Activated B cell treated with CpG ODN at 0.5 μM for 24 hours (primary cell): ENCODE measurements at regions of chr12 and their contacts with region 1.

Region 1: GRCh38 chr12:93677195-93678064 is at the start of gene CRADD:
- DNase-seq: peak; percentile 72
- ATAC-seq: peak; percentile 94
- H3K4me3 Mint-ChIP-seq: peak within 1 kb of the TSS; percentile 99
- H3K27ac Mint-ChIP-seq: peak within 1 kb of the TSS; percentile 100
- H3K4me1 Mint-ChIP-seq: peaks cover 23% of the 10 kb centered on the region
- H3K27me3 Mint-ChIP-seq: peaks cover 12% of the 10 kb centered on the region
- CTCF ChIP-seq: no peak
- total RNA-seq, gene CRADD: 10.3 and 15.3 TPM in 2 replicates

Region 2: GRCh38 chr12:93441617-93442410 is 235.6 kb before region 1 on chr12 and contains the start of gene UBE2N:
- CTCF ChIA-PET with region 1: no interaction called
- POLR2A ChIA-PET with region 1: interaction called, 9 read pairs
- intact Hi-C with region 1: loop called (anchors 1 kb)
- DNase-seq: peak; percentile 99
- ATAC-seq: peak; percentile 84
- H3K4me3 Mint-ChIP-seq: peak within 1 kb of the TSS; percentile 96
- H3K27ac Mint-ChIP-seq: peak within 1 kb of the TSS; percentile 96
- H3K4me1 Mint-ChIP-seq: peaks cover 56% of the 10 kb centered on the region
- H3K27me3 Mint-ChIP-seq: no peaks in the 10 kb centered on the region
- CTCF ChIP-seq: no peak
- total RNA-seq, gene UBE2N: 152 and 163 TPM in 2 replicates

Region 3: GRCh38 chr12:93624595-93625294 is 52.7 kb before region 1 on chr12:
- CTCF ChIA-PET with region 1: no interaction called
- POLR2A ChIA-PET with region 1: no interaction called
- intact Hi-C with region 1: loop called (anchors 2 kb)
- DNase-seq: no peak
- ATAC-seq: peak; percentile 83
- H3K4me3 Mint-ChIP-seq: no peak overlapping the region
- H3K27ac Mint-ChIP-seq: no peak overlapping the region
- H3K4me1 Mint-ChIP-seq: peaks cover 5% of the 10 kb centered on the region
- H3K27me3 Mint-ChIP-seq: no peaks in the 10 kb centered on the region
- CTCF ChIP-seq: no peak

Region 4: GRCh38 chr12:93742110-93742934 is 64.9 kb after region 1 on chr12:
- CTCF ChIA-PET with region 1: no interaction called
- POLR2A ChIA-PET with region 1: interaction called, 5 read pairs
- intact Hi-C with region 1: loop called (anchors 1 kb)
- DNase-seq: peak; percentile 56
- ATAC-seq: peak; percentile 93
- H3K4me3 Mint-ChIP-seq: peak overlapping the region; percentile 87
- H3K27ac Mint-ChIP-seq: peak overlapping the region; percentile 84
- H3K4me1 Mint-ChIP-seq: peaks cover 41% of the 10 kb centered on the region
- H3K27me3 Mint-ChIP-seq: no peaks in the 10 kb centered on the region
- CTCF ChIP-seq: no peak

Region 5: DNA sequence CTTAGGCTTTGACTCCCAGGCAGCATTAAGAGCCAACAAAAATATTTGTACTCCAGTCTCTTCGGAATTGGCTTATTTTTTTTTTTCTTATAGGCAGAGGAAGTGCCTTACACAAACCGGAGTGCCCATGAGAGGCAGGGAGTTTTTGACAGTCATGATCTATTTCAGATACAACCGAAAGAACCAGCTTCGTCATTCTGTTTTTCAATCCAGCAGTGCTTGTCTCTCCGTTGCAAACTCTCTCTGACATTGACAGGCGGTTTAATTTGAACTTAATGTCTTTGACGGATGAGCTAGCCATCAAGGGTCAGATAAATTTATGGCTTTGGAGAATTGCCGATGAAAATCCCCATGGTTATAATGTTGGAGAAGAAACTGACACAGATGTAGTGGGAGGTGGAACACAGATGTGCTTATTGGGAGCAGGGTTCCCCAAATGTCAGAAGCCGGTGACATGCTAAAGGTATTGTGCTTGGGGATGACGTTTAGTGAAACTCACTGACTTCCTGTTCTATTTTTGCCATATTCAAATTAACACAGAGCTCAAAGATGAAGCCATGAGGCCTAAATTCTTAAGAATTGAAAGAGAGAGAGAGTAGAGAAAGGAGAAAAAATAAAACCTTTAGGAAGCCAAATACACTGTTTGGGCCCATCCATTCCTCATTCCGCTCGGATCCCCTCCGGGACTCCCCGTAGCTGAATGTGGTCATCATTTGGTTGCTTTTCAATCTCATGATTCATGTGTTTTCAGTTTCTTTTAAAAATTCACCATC is 530.6 kb after region 1 on chr12:
- CTCF ChIA-PET with region 1: no interaction called
- POLR2A ChIA-PET with region 1: no interaction called
- intact Hi-C with region 1: loop called (anchors 1 kb)
- DNase-seq: peak; percentile 39
- ATAC-seq: peak; percentile 81
- H3K4me3 Mint-ChIP-seq: peak overlapping the region; percentile 82
- H3K27ac Mint-ChIP-seq: peak overlapping the region; percentile 98
- H3K4me1 Mint-ChIP-seq: peaks cover 68% of the 10 kb centered on the region
- H3K27me3 Mint-ChIP-seq: no peaks in the 10 kb centered on the region
- CTCF ChIP-seq: no peak

Region 6: DNA sequence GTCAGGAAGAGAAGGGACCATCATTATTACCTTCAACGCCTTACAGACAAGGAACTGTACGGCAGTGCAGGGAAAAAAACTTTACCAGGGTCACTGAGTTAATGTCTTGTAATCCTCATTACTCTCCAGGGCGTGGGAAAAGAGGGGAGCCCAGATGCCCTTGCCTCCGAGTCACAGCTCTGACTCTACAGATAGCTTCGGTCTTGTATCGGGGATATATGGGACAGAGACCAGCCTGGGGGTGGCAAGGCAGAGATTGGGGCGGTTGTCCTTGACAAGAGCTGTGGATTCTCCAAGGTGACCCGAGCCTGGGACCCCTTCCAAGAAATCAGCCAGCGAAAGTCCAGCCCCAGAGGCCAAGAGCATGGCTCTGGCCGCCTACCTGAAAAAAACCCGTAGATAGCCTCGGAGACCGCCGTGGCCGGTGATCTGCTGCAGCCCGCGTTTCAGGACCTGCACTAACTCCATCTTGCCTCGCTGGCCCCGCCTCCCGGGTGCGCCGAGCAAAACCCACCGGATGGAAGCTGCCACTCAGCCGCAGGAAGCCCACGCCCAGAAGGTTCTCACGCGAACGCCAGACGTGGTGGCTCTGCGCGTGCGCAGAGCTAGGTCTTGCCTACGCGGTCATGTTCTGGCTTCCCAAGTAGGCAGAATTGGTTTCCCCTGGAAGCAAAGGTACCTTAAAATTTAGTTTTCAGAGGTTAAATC is 1325.9 kb after region 1 on chr12 and contains the start of gene NDUFA12:
- CTCF ChIA-PET with region 1: no interaction called
- POLR2A ChIA-PET with region 1: interaction called, 5 read pairs
- intact Hi-C with region 1: loop called (anchors 1 kb)
- DNase-seq: peak; percentile 89
- ATAC-seq: peak; percentile 99
- H3K4me3 Mint-ChIP-seq: peak within 1 kb of the TSS; percentile 94
- H3K27ac Mint-ChIP-seq: peak within 1 kb of the TSS; percentile 90
- H3K4me1 Mint-ChIP-seq: peaks cover 35% of the 10 kb centered on the region
- H3K27me3 Mint-ChIP-seq: no peaks in the 10 kb centered on the region
- CTCF ChIP-seq: no peak
- total RNA-seq, gene NDUFA12: 80.2 and 81.7 TPM in 2 replicates

Region 7: DNA sequence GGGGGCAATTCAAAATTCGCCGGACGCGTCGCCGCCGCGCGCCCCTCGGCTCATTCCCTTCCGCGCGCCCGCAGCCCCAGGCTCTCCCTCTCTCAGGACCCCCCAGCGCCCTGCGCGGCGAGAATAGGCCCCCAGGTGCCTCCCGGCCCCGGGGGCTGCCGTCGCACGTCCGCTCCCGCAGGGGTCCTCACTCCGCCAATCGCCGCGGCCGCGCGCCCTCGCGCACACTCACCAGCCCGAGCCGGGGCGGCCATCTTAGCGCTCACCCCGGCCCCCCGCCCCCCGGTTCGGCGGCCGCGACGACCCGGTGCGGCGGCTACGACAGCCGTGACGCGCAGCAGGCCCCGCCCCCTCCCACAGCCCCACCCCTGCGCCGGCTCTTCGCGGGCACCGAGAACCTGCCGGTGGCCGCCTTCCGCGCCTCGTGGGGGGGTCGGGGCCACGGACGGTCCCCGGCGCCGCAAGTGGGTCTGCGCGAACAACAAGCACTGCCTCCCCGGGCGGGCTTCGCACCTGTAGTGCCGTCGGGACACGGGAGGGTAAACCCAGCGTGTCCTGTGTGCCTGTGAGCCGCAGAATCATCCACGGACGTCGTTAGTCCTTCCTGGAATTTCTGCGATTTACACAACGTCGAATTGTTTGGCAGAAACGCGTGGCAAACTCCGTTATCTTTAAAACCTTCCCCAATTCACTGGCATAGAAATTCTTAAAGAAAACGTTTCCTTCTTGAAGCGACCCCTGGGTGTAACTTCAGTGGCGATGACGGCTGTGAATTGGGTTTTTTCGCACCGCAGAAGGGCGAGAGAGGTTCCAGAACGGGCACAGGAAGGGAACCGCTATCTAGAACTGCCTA is 1871.3 kb after region 1 on chr12:
- CTCF ChIA-PET with region 1: no interaction called
- POLR2A ChIA-PET with region 1: no interaction called
- intact Hi-C with region 1: loop called (anchors 5 kb)
- DNase-seq: peak; percentile 64
- ATAC-seq: peak; percentile 86
- H3K4me3 Mint-ChIP-seq: peak overlapping the region; percentile 91
- H3K27ac Mint-ChIP-seq: peak overlapping the region; percentile 73
- H3K4me1 Mint-ChIP-seq: peaks cover 22% of the 10 kb centered on the region
- H3K27me3 Mint-ChIP-seq: no peaks in the 10 kb centered on the region
- CTCF ChIP-seq: no peak